Left cardiac atrium (tissue), 4 donors: ENCODE measurements at regions of chr21 and their contacts with region 1.

Region 1: GRCh38 chr21:30340441-30341241 is 3.1 kb upstream of the KRTAP27-1 start:
- DNase-seq: peak; percentile 40
- ATAC-seq: peak in 1 of 2 donors; percentile 47

Region 2: GRCh38 chr21:30434033-30434631 is 93.5 kb after region 1 on chr21:
- intact Hi-C with region 1: loop called in 1 of 2 experiments (anchors 5 kb)
- DNase-seq: no peak
- ATAC-seq: peak in 1 of 2 donors; percentile 54

Region 3: GRCh38 chr21:30733026-30733425 is 392.4 kb after region 1 on chr21:
- intact Hi-C with region 1: loop called in 1 of 2 experiments (anchors 5 kb)
- DNase-seq: no peak
- ATAC-seq: no peak

Region 4: DNA sequence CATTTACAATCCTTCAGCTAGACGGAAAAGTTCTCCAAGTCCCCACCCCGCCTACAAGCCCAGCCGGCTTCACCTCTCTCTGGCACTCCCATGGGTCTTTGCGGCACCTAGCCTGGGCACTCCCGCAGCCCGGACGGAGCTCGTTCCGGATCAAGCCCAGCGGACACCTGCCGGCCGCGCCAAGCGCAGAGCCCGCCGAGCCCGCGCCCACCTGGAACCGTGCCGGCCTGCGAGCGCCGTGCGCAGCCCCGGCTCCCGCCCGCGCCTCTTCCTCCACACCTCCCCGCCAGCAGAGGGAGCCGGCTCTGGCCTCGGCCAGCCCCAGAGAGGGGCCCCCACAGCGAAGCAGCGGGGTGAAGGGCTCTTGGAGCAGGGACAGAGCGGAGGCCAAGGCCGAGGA is 747.7 kb after region 1 on chr21:
- intact Hi-C with region 1: loop called in 1 of 2 experiments (anchors 5 kb)
- DNase-seq: no peak
- ATAC-seq: no peak